SK-N-SH (cell line): ENCODE measurements at regions of chr17 and their contacts with region 1.

Region 1: DNA sequence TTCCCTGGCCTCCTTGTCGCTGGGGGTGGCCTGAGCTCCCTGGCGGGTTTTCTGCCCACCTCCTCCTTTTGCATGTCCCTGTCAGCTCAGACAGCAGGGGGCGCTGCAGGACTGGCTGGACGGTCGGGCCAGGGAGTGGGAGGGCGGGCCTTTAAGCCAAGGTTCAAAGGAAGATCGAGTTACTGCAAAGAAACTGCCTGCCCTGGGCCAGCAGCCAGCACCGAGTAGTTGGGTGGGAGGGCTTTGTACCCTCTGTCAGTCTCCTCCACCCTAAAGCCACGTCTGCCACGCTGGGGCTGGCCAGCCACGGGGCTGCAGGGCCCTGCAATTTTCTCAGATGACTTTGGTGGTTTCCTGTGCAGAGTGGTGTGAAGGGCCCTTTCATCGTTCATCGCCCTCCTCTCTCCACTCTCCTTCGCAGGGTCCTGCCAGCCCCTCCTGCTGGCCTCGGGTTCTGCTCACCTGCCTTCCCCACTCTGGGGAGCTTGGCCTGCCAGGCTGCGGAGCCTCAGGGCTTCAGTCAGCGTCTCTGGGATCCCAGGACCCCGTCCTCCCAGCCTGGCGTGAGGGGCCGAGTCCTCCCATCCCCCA is 12.3 kb downstream of the GPR142 start:
- DNase-seq: peak; percentile 98
- H3K4me3 ChIP-seq: no peak overlapping the region
- H3K27ac ChIP-seq: no peak overlapping the region
- H3K4me1 ChIP-seq: peaks cover 0 to 2% of the 10 kb centered on the region in 2 experiments; a peak in 1 of 4 replicates
- H3K27me3 ChIP-seq: no peaks in the 10 kb centered on the region
- CTCF ChIP-seq: peak; percentile 52
- EP300 ChIP-seq: no peak
- RAD21 ChIP-seq: peak; percentile 99

Region 2: GRCh38 chr17:74163271-74163821 is 216.2 kb before region 1 on chr17:
- CTCF ChIA-PET with region 1: no interaction called
- POLR2A ChIA-PET with region 1: no interaction called
- DNase-seq: no peak
- H3K4me3 ChIP-seq: no peak overlapping the region
- H3K27ac ChIP-seq: no peak overlapping the region
- H3K4me1 ChIP-seq: no peaks in the 10 kb centered on the region
- H3K27me3 ChIP-seq: no peaks in the 10 kb centered on the region
- CTCF ChIP-seq: no peak
- EP300 ChIP-seq: no peak
- RAD21 ChIP-seq: no peak

Region 3: DNA sequence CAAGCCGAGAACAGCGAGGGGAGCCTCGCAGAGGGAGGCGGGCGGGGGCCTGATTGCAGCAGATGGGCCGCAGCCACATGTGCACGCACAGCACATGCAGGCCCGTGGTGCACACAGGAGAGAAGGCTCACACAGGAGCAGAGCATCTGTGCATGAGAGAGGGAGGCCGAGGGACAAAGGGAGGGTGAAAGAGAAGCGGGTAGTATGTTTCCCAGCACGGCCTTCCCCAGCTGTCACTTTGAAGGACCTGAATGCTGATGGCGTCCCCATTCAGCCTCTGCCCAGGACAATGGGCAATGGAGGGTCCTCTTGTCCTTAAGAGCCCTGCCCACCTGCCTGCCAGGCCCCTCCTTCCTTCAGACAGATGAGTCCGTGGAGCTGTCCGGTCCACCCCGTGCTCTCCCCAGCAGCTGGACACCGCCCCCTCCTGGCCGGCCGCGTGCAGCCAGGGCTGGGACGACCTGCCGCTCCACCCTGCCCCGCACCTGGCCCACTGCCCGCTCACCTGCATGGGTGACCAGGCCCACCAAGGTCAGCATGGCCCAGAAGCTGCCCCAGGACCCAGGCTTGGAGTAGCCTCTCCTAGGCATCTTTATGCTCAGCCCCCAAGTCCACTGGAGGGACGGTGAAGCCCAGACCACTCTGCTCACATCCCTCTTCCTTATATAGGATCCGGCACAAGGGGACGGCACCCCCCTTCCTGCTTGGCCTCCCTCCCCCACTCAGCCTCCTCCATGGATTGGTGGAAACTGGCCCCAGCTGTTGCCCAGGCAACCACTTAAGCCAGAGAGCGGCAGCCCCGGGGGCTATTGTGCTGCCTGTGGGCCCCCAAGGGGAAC is 18.1 kb before region 1 on chr17 and contains the start of gene BTBD17:
- CTCF ChIA-PET with region 1: interaction called, 159 read pairs
- POLR2A ChIA-PET with region 1: no interaction called
- DNase-seq: peak; percentile 78
- H3K4me3 ChIP-seq: peak within 1 kb of the TSS in 1 of 2 experiments; percentile 49; a peak in 1 of 4 replicates
- H3K27ac ChIP-seq: no peak within 1 kb of the TSS
- H3K4me1 ChIP-seq: no peaks in the 10 kb centered on the region; a peak in 1 of 4 replicates
- H3K27me3 ChIP-seq: no peaks in the 10 kb centered on the region
- CTCF ChIP-seq: no peak
- EP300 ChIP-seq: no peak
- RAD21 ChIP-seq: peak; percentile 40
- polyA plus RNA-seq, gene BTBD17: not detected in 2 replicates

Region 4: DNA sequence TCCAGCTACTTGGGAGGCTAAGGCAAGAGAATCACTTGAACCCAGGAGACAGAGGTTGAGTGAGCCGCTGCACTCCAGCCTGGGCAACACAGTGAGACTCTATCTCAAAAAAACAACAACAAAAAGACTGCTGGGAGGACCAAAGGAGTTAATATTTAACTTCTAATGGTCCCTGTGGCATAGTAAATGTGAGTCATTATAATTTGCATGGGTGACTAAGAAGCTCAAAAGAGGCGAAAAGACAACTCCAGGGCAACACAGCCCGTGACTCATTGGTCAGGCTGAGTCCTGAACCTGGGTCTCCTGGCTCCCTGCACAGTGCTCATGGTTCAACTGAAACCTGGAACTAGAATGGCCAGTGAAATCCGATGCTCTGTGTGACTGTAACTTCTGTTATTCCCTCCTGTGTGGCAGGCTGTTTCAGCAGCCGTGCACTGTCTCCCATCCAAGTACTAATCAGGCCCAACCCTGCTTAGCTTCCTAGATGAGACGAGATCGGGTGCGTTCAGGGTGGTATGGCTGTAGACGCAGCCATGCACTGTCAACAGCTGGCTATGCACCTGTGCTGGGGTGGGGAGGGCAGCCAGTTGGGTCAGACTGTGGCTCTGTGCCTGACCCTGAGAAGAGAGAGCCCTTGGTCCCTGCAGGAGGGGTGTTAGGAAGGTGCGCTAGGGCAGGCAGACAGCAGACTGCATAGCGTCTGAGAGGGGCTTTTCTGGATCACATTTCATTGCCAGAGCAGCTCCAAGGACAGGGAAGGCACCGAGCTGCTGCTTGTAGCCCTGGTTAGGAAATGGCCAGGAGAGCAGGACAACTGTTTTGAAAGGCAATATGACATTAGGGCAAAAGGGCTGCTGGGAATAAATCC is 37.8 kb after region 1 on chr17:
- CTCF ChIA-PET with region 1: interaction called, 28 read pairs
- POLR2A ChIA-PET with region 1: no interaction called
- DNase-seq: no peak
- H3K4me3 ChIP-seq: no peak overlapping the region
- H3K27ac ChIP-seq: no peak overlapping the region
- H3K4me1 ChIP-seq: no peaks in the 10 kb centered on the region
- H3K27me3 ChIP-seq: no peaks in the 10 kb centered on the region
- CTCF ChIP-seq: no peak
- EP300 ChIP-seq: no peak
- RAD21 ChIP-seq: no peak

Region 5: GRCh38 chr17:74467221-74467951 is 87.8 kb after region 1 on chr17:
- CTCF ChIA-PET with region 1: interaction called, 71 read pairs
- POLR2A ChIA-PET with region 1: no interaction called
- DNase-seq: no peak
- H3K4me3 ChIP-seq: no peak overlapping the region
- H3K27ac ChIP-seq: no peak overlapping the region
- H3K4me1 ChIP-seq: no peaks in the 10 kb centered on the region
- H3K27me3 ChIP-seq: no peaks in the 10 kb centered on the region
- CTCF ChIP-seq: no peak
- EP300 ChIP-seq: no peak
- RAD21 ChIP-seq: no peak

Region 6: DNA sequence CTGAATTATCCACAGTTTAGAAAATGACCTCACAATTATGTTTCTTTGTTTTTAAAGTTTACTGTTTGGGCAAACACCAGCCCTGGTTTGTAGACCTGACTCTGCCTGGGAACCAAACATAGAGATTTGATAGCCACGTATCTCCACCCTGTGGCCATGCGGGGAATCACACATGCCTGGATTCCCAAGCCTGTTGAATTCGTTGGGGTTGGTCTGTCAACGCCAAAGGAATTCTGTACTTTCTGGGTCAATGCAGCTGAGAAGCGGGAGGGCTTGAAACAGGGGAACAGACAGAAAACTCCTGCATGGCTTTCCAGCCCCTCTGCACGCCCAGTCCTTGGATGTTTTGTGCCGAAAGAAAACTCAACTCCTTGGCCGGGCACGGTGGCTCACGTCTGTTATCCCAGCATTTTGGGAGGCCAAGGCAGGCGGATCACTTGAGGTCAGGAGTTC is 113.8 kb after region 1 on chr17:
- CTCF ChIA-PET with region 1: interaction called, 85 read pairs
- POLR2A ChIA-PET with region 1: no interaction called
- DNase-seq: peak; percentile 81
- H3K4me3 ChIP-seq: no peak overlapping the region; a peak in 1 of 4 replicates
- H3K27ac ChIP-seq: no peak overlapping the region
- H3K4me1 ChIP-seq: no peaks in the 10 kb centered on the region
- H3K27me3 ChIP-seq: no peaks in the 10 kb centered on the region
- CTCF ChIP-seq: peak; percentile 74
- EP300 ChIP-seq: no peak
- RAD21 ChIP-seq: peak; percentile 94

Region 7: DNA sequence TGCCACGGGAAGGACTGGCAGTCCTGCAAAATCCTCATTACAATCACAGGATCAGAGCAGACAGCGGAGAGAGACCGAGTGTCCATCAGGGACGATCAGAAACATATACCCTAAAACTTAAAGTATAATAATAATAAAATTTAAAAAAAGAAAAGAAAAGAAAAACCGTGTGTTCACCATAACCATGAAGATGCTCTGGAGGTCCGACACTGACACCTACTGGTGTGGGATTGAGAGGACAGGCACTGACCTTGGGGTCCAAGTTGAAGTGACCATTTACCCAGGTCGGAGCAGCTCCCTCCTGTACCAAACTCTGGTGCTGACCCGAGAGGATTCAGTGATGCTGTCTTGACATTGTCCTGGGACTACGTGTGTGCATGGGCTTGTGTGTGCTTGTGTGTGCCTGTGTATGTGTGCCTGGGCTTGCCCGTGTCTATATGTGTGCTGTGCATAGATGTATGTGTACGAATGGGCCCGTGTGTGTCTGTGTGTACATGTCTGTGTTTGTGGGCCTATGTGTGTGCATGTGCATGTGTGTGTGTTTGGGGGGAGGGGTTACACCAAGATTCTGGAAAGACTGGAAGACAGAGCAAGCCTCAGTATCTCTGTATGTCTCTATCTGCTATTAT is 222.5 kb after region 1 on chr17:
- CTCF ChIA-PET with region 1: interaction called, 18 read pairs
- POLR2A ChIA-PET with region 1: no interaction called
- DNase-seq: peak; percentile 68
- H3K4me3 ChIP-seq: peak overlapping the region in 1 of 2 experiments; percentile 35; a peak in 1 of 4 replicates
- H3K27ac ChIP-seq: no peak overlapping the region
- H3K4me1 ChIP-seq: peaks cover 0 to 7% of the 10 kb centered on the region in 2 experiments; a peak in 1 of 4 replicates
- H3K27me3 ChIP-seq: no peaks in the 10 kb centered on the region
- CTCF ChIP-seq: peak; percentile 40
- EP300 ChIP-seq: no peak
- RAD21 ChIP-seq: peak; percentile 68